ENCODE measurements at regions of chr1 and their contacts with region 1.

Region 1: GRCh38 chr1:84632673-84633434 is 57.4 kb downstream of the SSX2IP start:
- H3K4me3 ChIP-seq: no peak overlapping the region
- H3K27ac ChIP-seq: no peak overlapping the region
- H3K4me1 ChIP-seq: peaks cover 2% of the 10 kb centered on the region; the same call in 1 of the 2 replicates
- CTCF ChIP-seq: no peak

Region 2: DNA sequence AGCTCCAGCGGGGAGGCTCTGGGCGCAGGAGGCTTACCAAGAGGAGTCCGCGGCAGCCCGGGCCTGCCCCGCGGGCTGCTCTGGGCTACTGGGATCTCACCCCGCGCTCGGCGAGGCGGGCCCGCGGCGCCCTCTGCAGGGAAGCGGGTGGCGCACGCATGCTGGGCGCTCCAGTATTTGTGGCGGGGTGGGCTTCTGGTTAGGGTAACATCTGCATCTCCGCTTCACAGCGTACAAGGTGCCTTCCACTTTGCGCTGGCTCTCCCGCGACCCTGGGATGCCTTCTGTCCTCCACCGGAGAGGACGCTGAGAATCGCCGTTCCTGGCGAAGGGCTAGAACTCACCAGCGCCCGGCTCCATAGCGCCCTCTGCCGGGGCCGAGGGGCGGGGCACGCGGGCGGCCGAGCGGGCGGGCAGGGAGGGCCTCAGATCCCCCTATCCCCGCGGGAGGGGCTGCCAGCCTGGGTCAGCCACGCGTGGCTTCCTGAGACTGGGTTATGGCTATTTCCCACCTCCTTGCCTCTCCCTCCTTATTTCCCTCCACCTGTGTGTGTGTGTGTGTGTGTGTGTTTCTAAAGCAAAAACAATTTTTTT is 12.0 kb before region 1 on chr1:
- CTCF ChIA-PET with region 1: interaction called, 14 read pairs
- POLR2A ChIA-PET with region 1: no interaction called
- H3K4me3 ChIP-seq: peak overlapping the region; percentile 67
- H3K27ac ChIP-seq: peak overlapping the region; percentile 71; the same call in 1 of the 2 replicates
- H3K4me1 ChIP-seq: peaks cover 2% of the 10 kb centered on the region; the same call in 1 of the 2 replicates
- CTCF ChIP-seq: peak; percentile 98